Panc1 (cell line): ENCODE measurements at regions of chr15 and their contacts with region 1.

Region 1: GRCh38 chr15:71294886-71295638 is 179.8 kb downstream of the THSD4 start:
- DNase-seq: peak; percentile 99
- ATAC-seq: peak; percentile 92
- H3K4me3 ChIP-seq: peak overlapping the region in 1 of 2 experiments; percentile 26; a peak in 2 of 4 replicates
- H3K27ac ChIP-seq: peak overlapping the region; percentile 89
- H3K4me1 ChIP-seq: peaks cover 48% of the 10 kb centered on the region
- H3K27me3 ChIP-seq: no peaks in the 10 kb centered on the region
- CTCF ChIP-seq: no peak

Region 2: DNA sequence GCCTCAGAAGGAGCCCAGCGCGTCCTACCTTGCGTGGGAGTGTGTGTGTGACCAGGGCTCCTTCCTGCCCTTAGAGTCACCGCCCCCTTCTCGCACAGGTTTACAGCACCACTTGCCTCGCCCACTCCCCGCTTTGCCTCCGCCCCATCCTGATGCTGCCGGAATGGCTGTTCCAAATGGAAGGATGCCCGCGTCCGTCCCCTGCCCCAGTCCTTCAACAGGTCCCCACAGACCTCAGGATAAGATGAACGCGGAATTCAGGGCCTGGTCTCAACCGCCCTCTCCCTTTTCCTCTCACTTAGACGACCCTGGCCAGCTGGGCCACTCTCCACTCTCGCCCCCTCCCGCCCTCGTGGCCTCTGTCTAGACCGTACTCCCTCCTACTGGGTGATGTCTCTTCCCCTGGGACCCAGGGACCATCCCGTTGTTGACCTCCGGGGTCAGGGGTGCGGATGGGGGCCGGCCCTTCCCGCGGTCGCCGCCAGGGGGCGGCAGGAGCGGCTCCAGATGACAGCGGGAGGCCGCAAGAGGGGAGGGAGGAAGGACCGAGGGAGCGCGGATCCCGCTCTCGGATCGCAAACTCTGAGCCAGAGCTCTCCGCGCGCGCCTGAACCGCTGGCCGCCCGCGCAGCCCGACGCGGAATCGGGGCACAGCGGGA is 180.0 kb before region 1 on chr15 and contains the start of gene THSD4:
- CTCF ChIA-PET with region 1: interaction called, 3 read pairs
- POLR2A ChIA-PET with region 1: no interaction called
- in situ Hi-C with region 1: no loop called
- intact Hi-C with region 1: loop called (anchors 10 kb)
- DNase-seq: no peak
- ATAC-seq: peak; percentile 79
- H3K4me3 ChIP-seq: peak within 1 kb of the TSS; percentile 72 to 85
- H3K27ac ChIP-seq: peak within 1 kb of the TSS; percentile 98
- H3K4me1 ChIP-seq: peaks cover 76% of the 10 kb centered on the region
- H3K27me3 ChIP-seq: no peaks in the 10 kb centered on the region
- CTCF ChIP-seq: peak; percentile 98
- total RNA-seq, gene THSD4: 65.4 TPM

Region 3: DNA sequence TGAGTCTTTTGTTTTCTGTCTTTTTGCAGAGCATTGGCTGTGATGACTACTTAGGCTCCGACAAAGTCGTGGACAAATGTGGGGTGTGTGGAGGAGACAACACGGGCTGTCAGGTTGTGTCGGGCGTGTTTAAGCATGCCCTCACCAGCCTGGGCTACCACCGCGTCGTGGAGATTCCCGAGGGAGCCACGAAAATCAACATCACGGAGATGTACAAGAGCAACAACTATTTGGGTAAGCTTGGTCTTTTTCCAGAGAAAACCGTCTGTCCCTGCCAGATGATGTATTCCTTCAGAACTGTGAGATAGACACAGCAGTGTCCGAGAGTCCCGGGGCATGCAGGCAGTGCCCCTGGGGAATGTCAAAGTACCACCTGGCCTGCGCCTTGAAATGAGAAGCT is 365.4 kb after region 1 on chr15:
- CTCF ChIA-PET with region 1: no interaction called
- POLR2A ChIA-PET with region 1: no interaction called
- in situ Hi-C with region 1: no loop called
- intact Hi-C with region 1: no loop called
- DNase-seq: no peak
- ATAC-seq: no peak
- H3K4me3 ChIP-seq: no peak overlapping the region
- H3K27ac ChIP-seq: no peak overlapping the region
- H3K4me1 ChIP-seq: no peaks in the 10 kb centered on the region
- H3K27me3 ChIP-seq: no peaks in the 10 kb centered on the region
- CTCF ChIP-seq: no peak